ENCODE measurements at regions of chr6 and their contacts with region 1.

Region 1: DNA sequence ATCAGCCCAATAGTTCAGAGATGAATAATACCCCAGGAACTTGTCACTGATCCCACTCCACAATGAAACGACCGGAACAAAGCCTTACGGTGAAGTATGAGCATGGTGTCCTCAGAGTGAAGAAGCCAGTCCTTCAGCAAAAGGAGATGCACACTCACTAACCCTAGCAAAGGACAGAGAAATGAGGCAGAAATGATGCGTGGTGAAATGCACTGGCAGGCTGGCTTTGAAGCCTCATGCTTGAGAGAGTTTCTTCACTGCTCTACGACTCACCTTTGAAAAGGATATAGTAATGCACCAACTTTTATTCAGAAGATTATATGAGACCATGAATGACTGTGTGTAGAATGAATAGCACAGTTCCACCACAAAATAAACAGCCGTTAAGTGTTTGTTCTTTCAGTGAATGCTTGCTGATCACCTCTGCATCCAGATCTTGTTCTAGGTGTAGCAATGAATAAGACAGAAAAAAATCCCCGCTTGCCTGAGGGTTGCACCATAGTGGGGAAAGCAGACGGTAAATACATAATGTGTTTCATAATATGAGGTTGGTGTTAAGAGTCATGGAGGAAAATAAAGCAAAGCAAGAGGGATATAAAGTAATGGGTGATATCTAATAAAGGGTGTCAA is 74.9 kb downstream of the PHACTR1 start:
- DNase-seq: no peak
- H3K4me3 Mint-ChIP-seq: no peak overlapping the region
- H3K27ac Mint-ChIP-seq: no peak overlapping the region
- H3K4me1 Mint-ChIP-seq: no peaks in the 10 kb centered on the region
- H3K27me3 Mint-ChIP-seq: no peaks in the 10 kb centered on the region

Region 2: DNA sequence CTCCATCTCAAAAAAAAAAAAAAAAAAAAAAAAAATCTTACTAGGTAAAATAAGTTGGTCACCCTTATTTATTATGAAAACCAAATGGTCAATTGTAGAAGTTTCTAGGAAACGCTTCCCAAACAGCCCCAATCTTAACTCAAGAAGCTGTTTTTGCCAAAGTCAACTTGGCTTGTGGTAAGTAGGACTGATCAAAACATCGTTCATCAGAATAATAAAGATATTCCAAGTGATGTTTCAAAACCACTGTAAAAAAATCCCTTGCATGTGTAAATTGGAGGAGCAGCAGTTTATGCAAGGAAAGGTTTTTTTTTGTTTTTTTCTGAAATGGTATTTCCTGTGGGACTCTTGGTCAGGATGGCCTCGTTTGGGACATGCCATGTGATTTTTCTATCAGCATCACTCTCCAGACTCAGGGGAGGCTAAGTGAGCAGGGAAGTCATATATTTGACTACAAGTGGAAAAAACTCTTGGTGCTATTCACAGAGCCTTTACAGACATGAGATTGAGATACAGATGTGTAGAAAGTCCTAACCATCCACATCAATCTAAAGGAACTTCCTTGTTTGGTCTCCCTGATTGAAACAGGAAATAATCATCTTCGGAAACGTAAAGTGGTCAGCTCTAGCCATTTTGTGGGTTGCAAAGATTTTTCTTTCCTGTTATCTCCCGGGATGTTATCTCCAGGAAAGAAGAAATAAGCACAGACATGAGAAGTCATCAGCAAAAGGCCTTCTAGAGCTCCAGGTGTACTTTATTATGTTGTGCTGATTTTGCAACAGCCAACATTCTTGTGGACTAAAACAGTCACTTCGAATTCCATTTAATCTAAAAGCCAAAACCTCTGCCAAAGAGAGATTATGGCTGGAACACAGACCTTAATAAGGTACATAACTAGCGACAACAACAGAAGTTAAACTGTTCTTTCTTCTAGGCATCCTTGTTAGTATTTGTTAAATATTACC is 323.5 kb before region 1 on chr6:
- intact Hi-C with region 1: no loop called
- DNase-seq: no peak
- H3K4me3 Mint-ChIP-seq: no peak overlapping the region
- H3K27ac Mint-ChIP-seq: no peak overlapping the region
- H3K4me1 Mint-ChIP-seq: no peaks in the 10 kb centered on the region
- H3K27me3 Mint-ChIP-seq: no peaks in the 10 kb centered on the region

Region 3: DNA sequence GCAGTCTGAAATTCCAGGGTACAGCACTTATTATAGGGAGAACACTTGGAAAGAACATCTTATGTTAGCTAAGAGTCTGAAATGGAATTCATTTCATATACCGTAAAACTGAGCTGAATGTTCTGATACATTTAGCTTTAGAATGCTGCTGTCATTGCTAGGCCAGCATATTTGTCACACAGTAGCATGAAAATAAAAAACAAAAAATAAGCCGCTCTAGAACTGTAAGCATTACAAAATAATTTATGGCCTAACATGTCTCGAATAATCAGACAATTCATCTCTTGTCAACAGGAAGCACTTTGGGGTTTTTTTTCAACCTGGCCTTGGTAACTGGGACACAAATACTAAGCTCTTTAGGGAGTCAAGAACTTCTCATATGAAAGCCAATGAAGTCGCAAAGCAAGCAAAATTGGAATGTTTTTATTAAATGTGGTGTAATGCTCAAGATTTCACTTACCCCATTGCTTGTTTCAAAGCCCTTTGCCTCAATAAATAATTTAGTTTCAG is 40.8 kb after region 1 on chr6:
- intact Hi-C with region 1: loop called (anchors 2 kb)
- DNase-seq: no peak
- H3K4me3 Mint-ChIP-seq: no peak overlapping the region
- H3K27ac Mint-ChIP-seq: no peak overlapping the region
- H3K4me1 Mint-ChIP-seq: no peaks in the 10 kb centered on the region
- H3K27me3 Mint-ChIP-seq: no peaks in the 10 kb centered on the region